Left cardiac atrium (tissue), 4 donors: ENCODE measurements at regions of chr10 and their contacts with region 1.

Region 1: GRCh38 chr10:120336911-120337540 is 120.0 kb upstream of the PLPP4 start:
- DNase-seq: no peak
- ATAC-seq: no peak

Region 2: DNA sequence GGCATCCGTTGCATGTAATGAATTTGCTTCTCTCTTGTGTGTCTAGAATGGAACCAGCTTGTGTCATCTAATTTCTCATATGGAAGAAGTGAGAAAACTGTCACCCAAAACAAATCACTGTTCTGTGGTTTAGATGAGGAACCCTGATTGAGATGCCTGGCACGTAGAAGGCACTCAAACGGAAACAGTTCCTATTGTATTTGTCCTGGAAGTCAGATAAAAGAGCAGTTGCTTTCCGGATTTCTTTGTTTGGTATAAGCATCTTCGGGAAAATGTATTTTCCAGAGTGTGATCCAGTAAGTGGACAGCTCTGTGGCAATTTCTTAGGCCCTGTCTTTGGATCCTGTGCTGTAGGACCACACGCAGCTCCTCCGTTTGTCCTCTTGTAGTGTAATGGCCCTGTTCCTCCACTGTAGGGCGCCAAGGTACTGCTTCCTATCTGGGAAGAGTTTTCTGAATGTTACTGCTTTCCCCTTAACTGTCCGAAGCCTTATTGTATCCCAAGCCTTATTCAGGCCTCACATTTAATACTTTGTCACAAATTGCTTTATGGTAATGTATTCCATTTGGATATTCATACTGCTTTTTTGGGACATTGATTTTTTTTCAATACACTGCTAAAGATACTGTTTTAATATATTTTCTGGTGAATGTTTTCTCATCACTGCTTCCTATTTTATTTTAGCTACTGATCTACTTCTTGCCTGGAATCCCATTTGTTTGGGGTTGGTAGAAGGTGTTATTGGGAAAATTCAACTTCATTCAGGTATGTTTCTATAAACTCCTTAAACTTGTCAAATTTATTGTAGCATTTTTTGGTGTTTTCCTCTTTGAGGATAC is 586.4 kb before region 1 on chr10:
- intact Hi-C with region 1: loop called in 1 of 2 experiments (anchors 10 kb)
- DNase-seq: peak; percentile 66
- ATAC-seq: peak; percentile 96

Region 3: DNA sequence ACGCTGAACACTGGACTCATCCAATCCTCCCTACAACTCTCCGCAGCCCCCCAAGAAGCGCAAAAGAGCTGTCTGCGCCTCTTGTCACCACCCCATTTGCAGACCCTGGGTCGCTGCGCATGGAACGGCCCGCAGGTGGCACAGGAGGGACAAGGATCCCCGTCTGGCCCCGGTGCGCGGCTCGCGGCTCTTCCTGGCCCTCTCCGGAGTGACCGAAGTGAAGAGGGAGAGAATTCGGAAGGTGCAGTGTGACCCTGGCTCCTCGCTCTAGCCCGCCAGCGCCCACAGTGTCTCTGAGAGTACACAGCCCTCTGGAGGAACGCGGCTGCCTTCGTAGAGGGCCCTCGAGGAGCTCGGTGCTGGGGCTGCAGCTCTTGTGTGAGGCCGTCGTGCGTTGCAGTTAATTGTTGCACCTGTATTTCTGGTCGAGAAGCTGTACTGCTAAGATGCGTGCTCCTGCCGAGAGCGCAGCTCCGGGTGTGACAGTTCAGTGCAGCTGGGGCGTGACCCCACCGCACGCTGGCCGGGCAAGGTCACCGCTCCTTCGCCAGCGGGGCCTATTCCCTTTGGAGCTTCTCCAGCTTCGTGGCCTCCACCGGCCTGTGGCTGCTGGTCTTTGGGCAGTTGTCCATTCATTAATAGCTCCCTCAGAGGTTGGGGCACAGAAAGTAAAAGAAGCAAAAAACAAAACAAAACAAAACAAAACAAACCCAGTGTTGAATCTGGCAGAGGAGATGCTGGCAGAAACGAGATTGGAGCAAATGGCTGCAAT is 325.5 kb before region 1 on chr10:
- intact Hi-C with region 1: no loop called
- DNase-seq: no peak
- ATAC-seq: no peak